Activated T-helper 2 cell treated with anti-CD3 and anti-CD28 coated beads, Interferon-gamma antibody, Interleukin-2, Interleukin-4, amounts not matched to agents 10 μg/mL and 5 μg/mL and 100 μg/mL, durations not matched to agents 14 hours and 24 hours and 36 hours (primary cell): ENCODE measurements at regions of chr12 and their contacts with region 1.

Region 1: DNA sequence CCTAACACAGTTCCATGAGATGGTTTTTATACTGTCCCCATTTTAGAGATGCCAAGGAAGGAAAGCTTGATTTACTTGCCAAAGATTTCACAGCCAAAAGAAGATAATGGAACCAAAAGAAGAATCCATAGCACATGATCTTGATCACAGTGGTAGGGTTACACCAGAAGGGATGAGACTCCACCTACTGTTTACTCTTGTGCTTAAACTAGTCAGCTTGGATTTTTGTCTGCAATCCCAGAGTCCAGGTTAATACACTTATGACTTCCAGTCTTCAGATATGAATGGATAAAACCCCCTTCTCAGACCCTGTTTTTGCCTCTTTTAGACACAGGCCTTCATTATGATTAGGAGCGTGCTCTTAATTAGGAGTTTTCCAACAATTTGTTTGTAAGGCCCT is 454.2 kb downstream of the AEBP2 start:
- DNase-seq: no peak
- H3K4me3 Mint-ChIP-seq: no peak overlapping the region
- H3K27ac Mint-ChIP-seq: no peak overlapping the region
- H3K4me1 Mint-ChIP-seq: peaks cover 12% of the 10 kb centered on the region
- H3K27me3 Mint-ChIP-seq: peaks cover 3% of the 10 kb centered on the region

Region 2: DNA sequence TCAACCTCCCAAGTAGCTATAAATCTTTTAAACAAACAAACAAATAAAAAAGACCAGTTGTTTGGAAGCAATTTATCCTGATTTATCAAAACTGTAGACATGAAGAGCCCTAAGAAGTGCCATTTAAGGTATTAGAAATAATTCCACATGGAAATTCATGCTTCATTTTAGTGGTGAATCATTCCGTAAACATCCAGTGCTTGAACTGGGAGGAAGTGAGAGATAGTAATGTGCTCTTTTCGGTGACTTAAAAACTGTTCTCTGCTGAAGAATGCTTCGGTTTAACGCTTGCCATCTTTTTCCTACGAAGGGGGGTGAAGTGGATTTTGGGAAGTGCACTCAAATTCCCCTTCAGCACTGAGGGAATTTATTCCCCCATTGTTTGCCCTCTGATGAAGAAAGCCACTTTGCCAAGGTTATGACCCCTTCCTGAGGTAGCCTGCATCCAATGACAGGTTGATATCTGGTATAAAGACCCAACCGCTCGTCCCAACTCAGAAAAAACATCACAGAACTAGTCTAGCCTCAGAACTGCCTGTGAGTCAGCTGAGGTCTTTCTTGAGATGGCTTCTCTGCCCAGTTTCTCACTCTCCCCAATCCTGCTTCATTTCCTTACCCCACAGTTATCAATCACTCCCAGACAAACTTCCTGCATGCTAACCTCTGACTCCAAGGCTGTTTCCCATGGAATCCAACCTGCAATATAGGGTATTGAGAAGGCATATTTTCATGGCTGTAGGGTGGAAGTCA is 210.2 kb before region 1 on chr12:
- intact Hi-C with region 1: loop called (anchors 1 kb)
- DNase-seq: no peak
- H3K4me3 Mint-ChIP-seq: no peak overlapping the region
- H3K27ac Mint-ChIP-seq: no peak overlapping the region
- H3K4me1 Mint-ChIP-seq: peaks cover 39% of the 10 kb centered on the region
- H3K27me3 Mint-ChIP-seq: peaks cover 4% of the 10 kb centered on the region

Region 3: GRCh38 chr12:19757317-19757877 is 136.1 kb before region 1 on chr12:
- intact Hi-C with region 1: loop called (anchors 10 kb)
- DNase-seq: no peak
- H3K4me3 Mint-ChIP-seq: no peak overlapping the region
- H3K27ac Mint-ChIP-seq: no peak overlapping the region
- H3K4me1 Mint-ChIP-seq: peaks cover 14% of the 10 kb centered on the region
- H3K27me3 Mint-ChIP-seq: no peaks in the 10 kb centered on the region

Region 4: GRCh38 chr12:19800884-19801283 is 92.6 kb before region 1 on chr12:
- intact Hi-C with region 1: loop called (anchors 1 kb)
- DNase-seq: no peak
- H3K4me3 Mint-ChIP-seq: no peak overlapping the region
- H3K27ac Mint-ChIP-seq: peak overlapping the region; percentile 83
- H3K4me1 Mint-ChIP-seq: peaks cover 21% of the 10 kb centered on the region
- H3K27me3 Mint-ChIP-seq: no peaks in the 10 kb centered on the region

Region 5: GRCh38 chr12:19822476-19822875 is 71.0 kb before region 1 on chr12:
- intact Hi-C with region 1: no loop called
- DNase-seq: no peak
- H3K4me3 Mint-ChIP-seq: no peak overlapping the region
- H3K27ac Mint-ChIP-seq: no peak overlapping the region
- H3K4me1 Mint-ChIP-seq: peaks cover 2% of the 10 kb centered on the region
- H3K27me3 Mint-ChIP-seq: no peaks in the 10 kb centered on the region